PC-9 (cell line): ENCODE measurements at regions of chr2 and their contacts with region 1.

Region 1: GRCh38 chr2:68870215-68870614 is 982 bp downstream of the BMP10 start:
- DNase-seq: no peak
- H3K4me3 ChIP-seq: no peak overlapping the region
- H3K27ac ChIP-seq: no peak overlapping the region
- H3K4me1 ChIP-seq: no peaks in the 10 kb centered on the region
- H3K27me3 ChIP-seq: no peaks in the 10 kb centered on the region; the same call in 1 of the 2 replicates
- CTCF ChIP-seq: no peak

Region 2: GRCh38 chr2:68901199-68901960 is 31.2 kb after region 1 on chr2:
- CTCF ChIA-PET with region 1: no interaction called
- POLR2A ChIA-PET with region 1: interaction called, 10 read pairs
- intact Hi-C with region 1: no loop called
- DNase-seq: no peak
- H3K4me3 ChIP-seq: no peak overlapping the region
- H3K27ac ChIP-seq: no peak overlapping the region
- H3K4me1 ChIP-seq: no peaks in the 10 kb centered on the region
- H3K27me3 ChIP-seq: no peaks in the 10 kb centered on the region
- CTCF ChIP-seq: 0 out of 2 replicates have a peak, but pooled peaks have one; percentile 18

Region 3: GRCh38 chr2:69073928-69074570 is 203.8 kb after region 1 on chr2:
- CTCF ChIA-PET with region 1: no interaction called
- POLR2A ChIA-PET with region 1: no interaction called
- intact Hi-C with region 1: no loop called
- DNase-seq: peak; percentile 21 to 61
- H3K4me3 ChIP-seq: no peak overlapping the region
- H3K27ac ChIP-seq: no peak overlapping the region
- H3K4me1 ChIP-seq: 0 out of 2 replicates have a peak, but pooled peaks cover 5% of the 10 kb centered on the region
- H3K27me3 ChIP-seq: no peaks in the 10 kb centered on the region
- CTCF ChIP-seq: no peak